Motor neuron (in vitro differentiated cells): ENCODE measurements at regions of chr9 and their contacts with region 1.

Region 1: GRCh38 chr9:89410641-89411350 is 87.1 kb downstream of the SEMA4D start:
- ATAC-seq: peak in 3 of 8 experiments; percentile 36 to 65 (median 58)
- H3K4me3 ChIP-seq: no peak overlapping the region
- H3K27ac ChIP-seq: no peak overlapping the region
- H3K4me1 ChIP-seq: peaks cover 36 to 44% of the 10 kb centered on the region in 2 donors

Region 2: DNA sequence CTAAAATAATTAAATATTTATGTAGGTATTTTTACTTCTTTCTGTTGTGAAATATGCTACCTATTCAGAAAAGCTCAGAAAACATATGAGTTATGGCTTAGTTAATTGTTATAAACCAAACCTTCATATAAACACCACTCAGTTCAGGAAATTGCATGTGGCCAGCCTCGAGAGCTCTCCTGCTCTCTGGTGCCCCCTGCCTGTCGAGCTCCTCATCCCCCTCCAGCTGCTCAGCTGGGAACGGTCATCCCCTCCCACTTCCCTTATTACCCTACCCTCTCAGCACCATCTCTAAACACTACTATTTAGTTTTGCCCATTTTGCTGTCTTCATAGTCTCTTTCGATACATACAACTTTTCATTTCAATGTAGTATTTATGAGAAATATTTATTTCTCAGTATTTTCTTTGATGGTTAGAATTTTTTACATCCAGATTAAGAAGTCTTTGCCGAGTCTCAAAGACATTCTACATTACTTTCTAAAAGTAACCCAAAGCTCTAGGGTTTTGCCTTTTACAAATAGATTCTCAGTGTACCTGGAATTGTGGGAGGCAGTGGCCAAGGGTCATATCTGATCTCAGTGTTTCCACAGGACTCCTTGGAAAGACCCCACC is 138.3 kb after region 1 on chr9:
- in situ Hi-C with region 1: loop called in 1 of 9 experiments (anchors 25 kb)
- ATAC-seq: peak; percentile 73 to 93 (median 86)
- H3K4me3 ChIP-seq: no peak overlapping the region
- H3K27ac ChIP-seq: no peak overlapping the region
- H3K4me1 ChIP-seq: no peaks in the 10 kb centered on the region